ENCODE measurements at regions of chr1 and their contacts with region 1.

Region 1: DNA sequence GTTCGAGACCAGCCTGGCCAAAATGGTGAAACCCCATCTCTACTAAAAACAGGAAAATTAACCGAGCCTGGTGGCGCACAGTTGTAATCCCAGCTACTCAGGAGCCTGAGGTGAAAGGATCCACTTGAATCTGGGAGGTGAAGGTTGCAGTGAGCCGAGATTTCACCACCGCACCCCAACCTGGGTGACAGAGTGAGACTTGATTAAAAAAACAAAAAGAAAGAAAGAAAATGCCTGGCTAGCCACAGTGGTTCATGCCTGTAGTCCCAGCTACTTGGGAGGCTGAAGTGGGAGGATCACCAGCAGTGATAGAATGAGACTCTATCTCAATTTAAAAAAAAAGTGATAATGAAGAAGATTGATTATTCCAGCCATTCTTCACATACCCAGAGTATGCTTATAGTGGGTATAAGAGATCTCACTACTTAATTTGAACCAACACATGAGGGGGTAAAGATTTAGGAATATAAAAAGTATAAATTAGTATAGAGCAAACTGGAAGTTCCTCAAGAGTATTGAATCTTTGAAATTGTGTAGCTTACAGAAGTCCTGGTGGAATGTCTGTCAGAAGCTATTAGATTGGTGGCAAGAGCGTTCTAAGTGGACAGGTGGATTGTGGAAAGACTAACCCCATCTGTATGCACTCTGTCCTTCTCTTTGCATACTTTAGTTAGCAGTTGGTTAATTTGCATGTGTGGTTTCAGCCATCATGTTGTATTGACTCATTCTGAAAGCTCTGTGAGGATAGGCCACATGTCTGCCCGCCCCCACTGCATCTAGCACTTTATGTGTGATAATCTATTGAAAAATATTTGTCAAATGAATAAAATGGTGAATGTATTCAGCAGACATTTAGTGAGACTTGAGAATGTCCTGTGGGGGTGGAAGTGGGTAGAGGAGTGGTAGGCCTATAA is 25.0 kb downstream of the RLF start:
- DNase-seq: peak; percentile 62
- ATAC-seq: peak; percentile 94
- H3K4me3 ChIP-seq: no peak overlapping the region
- H3K4me3 Mint-ChIP-seq: peak overlapping the region; percentile 60
- H3K27ac ChIP-seq: no peak overlapping the region
- H3K27ac Mint-ChIP-seq: no peak overlapping the region
- H3K4me1 ChIP-seq: peaks cover 18 to 20% of the 10 kb centered on the region in 2 donors
- H3K4me1 Mint-ChIP-seq: peaks cover 48% of the 10 kb centered on the region
- H3K27me3 ChIP-seq: no peaks in the 10 kb centered on the region
- H3K27me3 Mint-ChIP-seq: no peaks in the 10 kb centered on the region
- CTCF ChIP-seq: no peak

Region 2: DNA sequence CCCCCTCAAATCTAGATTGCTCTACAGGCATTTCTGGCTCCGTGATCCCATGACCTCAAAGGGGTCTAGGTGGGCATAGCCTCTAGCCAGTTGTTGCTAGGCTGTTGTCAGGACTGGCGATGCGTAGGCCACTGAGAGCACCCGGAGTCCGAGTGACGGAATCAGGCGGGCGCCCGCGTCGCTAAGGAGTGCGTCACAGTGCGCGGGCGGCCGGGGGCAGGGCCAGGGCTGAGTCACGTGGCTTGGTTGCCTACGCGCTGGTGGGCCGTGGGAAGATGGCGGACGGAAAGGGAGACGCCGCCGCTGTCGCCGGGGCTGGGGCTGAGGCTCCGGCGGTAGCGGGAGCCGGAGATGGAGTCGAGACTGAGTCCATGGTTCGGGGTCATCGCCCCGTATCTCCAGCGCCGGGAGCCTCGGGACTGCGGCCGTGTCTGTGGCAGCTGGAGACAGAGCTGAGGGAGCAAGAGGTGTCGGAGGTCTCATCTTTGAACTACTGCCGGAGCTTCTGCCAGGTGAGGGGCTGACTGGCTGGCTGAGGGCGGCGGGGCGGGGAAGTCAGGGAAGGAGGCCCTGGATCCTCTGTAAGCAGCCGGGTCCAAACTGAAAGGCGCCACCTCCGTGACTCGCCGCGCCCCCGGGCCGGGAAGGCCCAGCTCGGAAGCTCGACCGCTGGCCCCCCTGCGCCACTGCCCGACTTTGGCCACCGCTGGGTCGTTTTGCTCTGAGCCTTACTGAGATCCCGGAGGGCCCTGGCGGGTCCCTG is 24.9 kb before region 1 on chr1 and contains the start of gene RLF:
- CTCF ChIA-PET with region 1: interaction called, 11 read pairs
- POLR2A ChIA-PET with region 1: interaction called, 7 read pairs
- intact Hi-C with region 1: loop called (anchors 1 kb)
- DNase-seq: peak; percentile 96
- ATAC-seq: peak; percentile 97
- H3K4me3 ChIP-seq: peak within 1 kb of the TSS; percentile 93 to 97 (median 95)
- H3K4me3 Mint-ChIP-seq: peak within 1 kb of the TSS; percentile 38
- H3K27ac ChIP-seq: peak within 1 kb of the TSS; percentile 96 to 97
- H3K27ac Mint-ChIP-seq: no peak within 1 kb of the TSS
- H3K4me1 ChIP-seq: peaks cover 28 to 39% of the 10 kb centered on the region in 2 donors
- H3K4me1 Mint-ChIP-seq: peaks cover 22% of the 10 kb centered on the region
- H3K27me3 ChIP-seq: no peaks in the 10 kb centered on the region
- H3K27me3 Mint-ChIP-seq: no peaks in the 10 kb centered on the region
- CTCF ChIP-seq: no peak
- total RNA-seq, gene RLF: 21.4 and 21.9 TPM in 2 replicates

Region 3: DNA sequence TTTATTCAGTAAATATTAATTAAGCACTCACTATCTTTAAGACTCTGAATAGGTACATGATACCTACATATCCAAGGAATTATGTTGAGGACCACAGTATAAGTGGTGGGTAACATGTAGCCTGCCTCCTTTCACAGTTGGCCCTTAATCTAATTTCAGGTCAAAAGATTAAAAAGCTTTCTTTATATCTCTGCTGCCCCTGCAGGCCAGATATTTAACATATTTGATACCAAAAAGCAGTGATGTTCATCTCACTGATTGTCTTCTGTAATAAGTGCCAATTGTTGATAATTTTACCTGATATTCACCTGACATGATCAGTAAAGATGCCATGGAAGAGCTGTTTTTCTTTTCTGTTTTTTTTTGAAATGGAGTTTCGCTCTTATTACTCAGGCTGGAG is 11.4 kb after region 1 on chr1:
- CTCF ChIA-PET with region 1: interaction called, 5 read pairs
- POLR2A ChIA-PET with region 1: interaction called, 12 read pairs
- intact Hi-C with region 1: no loop called
- DNase-seq: peak; percentile 25
- ATAC-seq: no peak
- H3K4me3 ChIP-seq: no peak overlapping the region
- H3K4me3 Mint-ChIP-seq: no peak overlapping the region
- H3K27ac ChIP-seq: no peak overlapping the region
- H3K27ac Mint-ChIP-seq: no peak overlapping the region
- H3K4me1 ChIP-seq: no peaks in the 10 kb centered on the region
- H3K4me1 Mint-ChIP-seq: no peaks in the 10 kb centered on the region
- H3K27me3 ChIP-seq: no peaks in the 10 kb centered on the region
- H3K27me3 Mint-ChIP-seq: no peaks in the 10 kb centered on the region
- CTCF ChIP-seq: peak; percentile 54

Region 4: DNA sequence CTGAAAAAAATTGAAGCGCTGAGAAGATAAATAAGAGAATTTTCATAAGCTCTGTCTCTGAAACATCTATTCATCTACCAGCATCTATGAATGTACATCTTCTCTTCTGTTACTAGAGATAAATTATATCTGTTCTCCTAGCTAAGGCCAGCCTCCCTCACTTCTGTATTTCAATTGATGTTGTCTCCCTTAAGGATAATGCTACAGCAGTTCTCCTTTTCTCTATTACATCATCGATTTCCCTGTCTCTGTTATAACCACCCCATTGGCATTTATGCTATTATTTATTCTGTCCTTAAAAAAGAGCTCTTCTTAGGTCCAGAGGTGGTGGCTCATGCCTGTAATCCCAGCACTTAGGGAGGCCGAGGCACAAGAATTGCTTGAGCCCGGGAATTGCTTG is 18.6 kb after region 1 on chr1:
- CTCF ChIA-PET with region 1: interaction called, 7 read pairs
- POLR2A ChIA-PET with region 1: interaction called, 12 read pairs
- intact Hi-C with region 1: no loop called
- DNase-seq: no peak
- ATAC-seq: no peak
- H3K4me3 ChIP-seq: no peak overlapping the region
- H3K4me3 Mint-ChIP-seq: no peak overlapping the region
- H3K27ac ChIP-seq: no peak overlapping the region
- H3K27ac Mint-ChIP-seq: no peak overlapping the region
- H3K4me1 ChIP-seq: peaks cover 3 to 5% of the 10 kb centered on the region in 2 donors
- H3K4me1 Mint-ChIP-seq: peaks cover 13% of the 10 kb centered on the region
- H3K27me3 ChIP-seq: no peaks in the 10 kb centered on the region
- H3K27me3 Mint-ChIP-seq: no peaks in the 10 kb centered on the region
- CTCF ChIP-seq: no peak

Region 5: DNA sequence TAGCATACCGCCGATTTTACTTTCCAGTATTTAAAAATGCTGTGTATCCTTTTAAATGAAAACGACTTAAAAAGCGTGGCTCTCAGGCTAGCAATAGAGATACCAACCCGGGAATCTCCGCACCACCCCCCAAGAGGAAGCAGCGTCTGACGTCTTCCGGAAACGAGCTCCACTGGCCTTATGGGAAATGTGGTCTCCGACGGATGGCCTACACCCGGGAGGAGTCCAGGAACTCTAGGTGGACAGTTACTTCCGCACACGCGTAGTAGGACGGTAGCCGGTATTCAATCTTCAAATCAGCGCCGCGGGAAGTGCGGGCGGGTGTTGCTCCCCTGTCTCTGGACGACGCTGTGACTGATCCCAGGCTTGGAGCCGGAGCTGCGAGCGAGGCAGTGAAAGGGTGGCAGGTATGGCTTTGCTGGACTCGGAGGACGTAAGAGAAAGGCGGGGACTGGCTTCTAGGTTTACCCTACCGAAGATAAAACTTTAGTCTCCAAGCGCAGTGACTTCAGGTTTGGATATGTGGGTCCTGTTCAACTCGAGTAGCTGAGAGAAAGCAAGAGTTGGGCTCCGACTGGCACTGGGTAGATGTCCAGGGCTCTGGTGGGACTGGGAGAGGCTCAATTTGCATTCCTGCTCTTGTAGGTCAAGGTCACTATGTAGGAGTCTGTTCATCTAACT is 345.3 kb after region 1 on chr1 and contains the start of gene ZNF684:
- CTCF ChIA-PET with region 1: no interaction called
- POLR2A ChIA-PET with region 1: no interaction called
- intact Hi-C with region 1: no loop called
- DNase-seq: peak; percentile 91
- ATAC-seq: peak; percentile 98
- H3K4me3 ChIP-seq: peak within 1 kb of the TSS; percentile 50 to 94 (median 80)
- H3K4me3 Mint-ChIP-seq: peak within 1 kb of the TSS; percentile 100
- H3K27ac ChIP-seq: peak within 1 kb of the TSS; percentile 60 to 92
- H3K27ac Mint-ChIP-seq: peak within 1 kb of the TSS; percentile 96
- H3K4me1 ChIP-seq: peaks cover 19 to 22% of the 10 kb centered on the region in 2 donors
- H3K4me1 Mint-ChIP-seq: peaks cover 26% of the 10 kb centered on the region
- H3K27me3 ChIP-seq: peaks cover 0 to 3% (median 1%) of the 10 kb centered on the region in 4 experiments
- H3K27me3 Mint-ChIP-seq: peaks cover 5% of the 10 kb centered on the region
- CTCF ChIP-seq: no peak
- total RNA-seq, gene ZNF684: 6.3 and 7.4 TPM in 2 replicates